ENCODE measurements at regions of chr6 and their contacts with region 1.

Region 1: GRCh38 chr6:31366693-31367470 is 9.9 kb upstream of the HLA-B start:
- DNase-seq: peak; percentile 88 to 93 (median 90)
- H3K4me3 ChIP-seq: no peak overlapping the region
- H3K27ac ChIP-seq: no peak overlapping the region
- H3K4me1 ChIP-seq: no peaks in the 10 kb centered on the region
- H3K27me3 ChIP-seq: peaks cover 3% of the 10 kb centered on the region
- CTCF ChIP-seq: peak; percentile 91 to 97 (median 96)
- POLR2A ChIP-seq: no peak

Region 2: GRCh38 chr6:31197559-31198305 is 169.2 kb before region 1 on chr6:
- intact Hi-C with region 1: loop called (anchors 5 kb)
- DNase-seq: peak; percentile 88 to 97 (median 94)
- H3K4me3 ChIP-seq: peak overlapping the region; percentile 61 to 83 (median 70)
- H3K27ac ChIP-seq: peak overlapping the region; percentile 84 to 98 (median 94)
- H3K4me1 ChIP-seq: no peaks in the 10 kb centered on the region
- H3K27me3 ChIP-seq: no peaks in the 10 kb centered on the region
- CTCF ChIP-seq: no peak
- POLR2A ChIP-seq: peak in 1 of 2 donors; percentile 78

Region 3: DNA sequence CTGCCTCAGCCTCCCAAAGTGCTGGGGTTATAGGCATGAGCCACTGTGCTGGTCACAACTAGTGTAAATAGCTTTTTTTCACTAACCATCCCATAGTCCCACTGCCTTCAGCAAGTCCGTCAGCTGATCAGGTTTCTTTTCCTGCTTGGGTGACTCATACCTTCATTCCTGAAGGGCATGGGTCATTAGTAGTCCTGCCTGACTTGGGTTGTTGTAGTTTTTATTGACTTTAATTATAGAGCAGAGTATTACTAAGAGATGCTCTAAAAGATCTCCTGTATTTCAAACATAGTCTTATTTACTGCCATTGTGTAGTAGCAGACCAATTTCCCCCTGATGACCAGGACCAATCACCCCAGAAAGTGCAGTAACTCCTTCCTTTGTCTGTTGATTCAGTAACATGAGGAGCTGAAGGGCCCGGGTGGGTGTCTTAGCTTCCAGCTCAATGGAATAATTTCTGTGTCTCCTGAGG is 120.8 kb before region 1 on chr6:
- intact Hi-C with region 1: no loop called
- DNase-seq: no peak
- H3K4me3 ChIP-seq: no peak overlapping the region
- H3K27ac ChIP-seq: no peak overlapping the region
- H3K4me1 ChIP-seq: no peaks in the 10 kb centered on the region
- H3K27me3 ChIP-seq: peaks cover 5% of the 10 kb centered on the region
- CTCF ChIP-seq: no peak
- POLR2A ChIP-seq: no peak

Measured in adrenal gland (tissue), 19 donors.